Posterior vena cava (tissue), 2 donors: ENCODE measurements at regions of chr3 and their contacts with region 1.

Region 1: GRCh38 chr3:13161024-13161759 is 88.0 kb upstream of the IQSEC1 start:
- DNase-seq: peak; percentile 67

Region 2: DNA sequence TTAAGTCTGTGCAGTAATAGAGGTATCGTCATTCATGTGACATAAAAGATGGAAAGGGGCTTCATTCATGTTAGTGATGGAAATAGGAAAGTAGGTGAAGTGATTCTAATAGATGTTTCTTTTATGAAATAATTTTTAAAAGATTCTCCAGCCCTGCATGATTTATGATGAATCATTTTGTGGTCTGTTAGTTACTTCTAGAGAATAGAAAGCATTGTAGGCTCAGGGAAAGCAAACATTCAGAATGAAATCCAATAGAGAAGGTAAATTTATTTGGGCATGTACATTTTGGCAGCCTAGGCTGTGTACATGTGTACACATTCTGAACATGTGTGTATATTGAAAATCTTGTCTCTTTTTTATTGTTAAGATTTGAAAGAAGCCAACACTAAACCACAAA is 849.2 kb before region 1 on chr3:
- intact Hi-C with region 1: loop called in 1 of 2 experiments (anchors 5 kb)
- DNase-seq: no peak

Region 3: DNA sequence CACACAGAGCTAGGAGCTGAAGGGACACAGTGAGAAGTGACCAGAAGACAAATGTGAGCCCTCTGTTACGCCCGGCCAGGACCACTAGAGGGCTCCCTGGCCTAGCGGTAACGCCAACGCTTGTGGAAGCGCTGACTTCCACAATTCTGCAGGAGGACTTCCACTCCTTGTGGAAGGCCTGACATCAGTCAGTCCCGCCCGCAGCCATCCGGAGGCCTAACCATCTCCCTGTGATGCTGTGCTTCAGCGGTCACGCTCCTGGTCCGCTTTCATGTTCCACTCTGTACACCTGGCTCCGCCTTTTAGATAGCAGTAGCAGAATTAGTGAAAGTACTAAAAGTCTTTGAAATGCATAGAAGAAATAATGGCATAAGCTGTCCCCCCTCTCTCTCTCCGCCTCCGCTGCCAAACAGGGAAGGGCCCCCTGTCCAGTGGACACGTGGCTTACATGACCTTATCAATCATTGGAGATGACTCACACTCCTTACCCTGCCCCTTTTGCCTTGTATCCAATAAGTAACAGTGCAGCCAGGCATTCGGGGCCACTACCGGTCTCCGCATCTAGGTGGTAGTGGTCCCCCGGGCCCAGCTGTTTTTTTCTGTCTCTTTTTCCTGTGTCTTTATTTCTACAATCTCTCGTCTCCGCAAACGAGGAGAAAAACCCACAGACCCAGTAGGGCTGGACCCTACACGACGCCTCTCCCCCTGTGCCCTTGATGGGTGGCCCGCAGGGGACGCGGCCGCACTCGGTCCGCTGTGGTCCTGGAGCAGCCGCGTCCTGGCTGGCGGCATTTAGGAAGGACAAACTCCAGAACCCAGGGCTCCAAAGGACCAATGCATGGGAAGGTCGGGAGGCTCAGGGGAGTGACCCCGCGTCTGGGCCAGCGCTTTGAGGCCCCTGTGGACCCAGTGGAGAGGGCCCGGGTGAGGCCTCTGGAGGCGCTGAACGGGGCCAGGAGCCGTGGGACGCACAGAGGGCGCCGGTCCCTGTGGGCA is 292.9 kb before region 1 on chr3:
- intact Hi-C with region 1: no loop called
- DNase-seq: peak; percentile 95

Region 4: DNA sequence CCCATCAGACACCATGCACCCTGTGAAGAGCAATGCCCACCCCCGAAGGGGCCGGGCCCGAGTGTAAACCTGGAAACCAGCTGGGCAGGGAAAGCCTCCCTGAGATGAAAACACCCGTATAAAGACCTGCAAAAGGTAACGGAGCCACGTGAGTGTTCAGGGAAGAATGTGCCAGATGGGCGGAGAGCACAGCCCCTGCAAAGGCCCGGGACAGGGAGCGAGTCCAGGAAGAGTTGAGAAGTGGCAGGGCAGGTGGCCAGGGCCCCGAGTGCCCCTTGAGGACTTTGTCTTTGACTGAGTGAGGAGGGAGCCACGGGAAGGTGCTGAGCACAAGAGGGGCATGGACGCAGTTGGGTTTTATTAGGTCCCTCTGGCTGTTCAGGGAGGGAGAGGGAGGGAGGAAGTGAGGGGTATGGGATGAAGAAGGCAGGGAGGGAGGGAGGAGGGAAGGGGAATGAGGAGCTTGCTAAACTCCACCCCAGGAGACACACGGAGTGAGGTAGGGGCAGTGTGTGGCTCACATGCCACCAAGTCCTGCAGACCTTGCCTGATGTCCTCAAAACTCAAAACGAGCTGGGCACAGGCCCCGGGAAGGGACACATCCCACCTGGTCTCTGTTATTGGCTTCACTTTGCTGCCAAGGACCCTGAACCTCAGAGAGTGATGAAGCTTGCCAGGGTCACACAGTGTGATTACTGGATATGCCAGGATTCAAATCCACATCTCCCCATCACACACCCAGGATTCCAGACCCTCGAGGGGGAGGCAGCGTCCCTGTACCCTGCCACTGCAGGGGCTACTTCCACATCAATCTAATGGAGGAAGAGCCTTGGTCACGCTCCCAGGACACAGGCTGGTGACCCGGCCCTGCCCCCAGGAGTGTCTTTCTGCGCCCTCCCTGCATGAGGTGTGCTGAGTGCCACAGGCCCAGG is 38.8 kb before region 1 on chr3:
- intact Hi-C with region 1: no loop called
- DNase-seq: peak; percentile 69